HCT116 (cell line): ENCODE measurements at regions of chr9 and their contacts with region 1.

Region 1: DNA sequence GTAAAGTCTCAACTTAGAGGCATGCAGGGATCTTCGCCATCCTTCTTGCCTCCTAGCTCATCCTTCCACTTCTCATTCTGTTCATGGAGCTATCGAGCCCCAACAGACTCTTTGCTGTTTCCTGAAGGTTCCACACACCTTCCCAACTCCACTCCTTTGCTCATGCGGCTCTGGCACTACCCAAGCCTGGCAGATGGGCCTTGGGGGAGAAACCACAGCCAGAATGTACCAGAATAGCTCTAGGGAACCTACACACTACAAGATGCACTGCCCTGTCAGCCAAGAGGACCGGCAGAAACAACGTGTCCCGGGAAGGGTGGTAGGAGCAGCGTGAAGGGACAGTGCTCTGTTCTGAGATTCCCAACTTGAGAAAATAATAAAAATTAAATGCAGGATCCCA is 178.9 kb downstream of the GABBR2 start:
- DNase-seq: no peak
- ATAC-seq: no peak
- H3K4me3 ChIP-seq: no peak overlapping the region
- H3K27ac ChIP-seq: no peak overlapping the region
- H3K4me1 ChIP-seq: no peaks in the 10 kb centered on the region
- H3K27me3 ChIP-seq: no peaks in the 10 kb centered on the region
- CTCF ChIP-seq: no peak
- POLR2A ChIP-seq: no peak
- RAD21 ChIP-seq: no peak

Region 2: DNA sequence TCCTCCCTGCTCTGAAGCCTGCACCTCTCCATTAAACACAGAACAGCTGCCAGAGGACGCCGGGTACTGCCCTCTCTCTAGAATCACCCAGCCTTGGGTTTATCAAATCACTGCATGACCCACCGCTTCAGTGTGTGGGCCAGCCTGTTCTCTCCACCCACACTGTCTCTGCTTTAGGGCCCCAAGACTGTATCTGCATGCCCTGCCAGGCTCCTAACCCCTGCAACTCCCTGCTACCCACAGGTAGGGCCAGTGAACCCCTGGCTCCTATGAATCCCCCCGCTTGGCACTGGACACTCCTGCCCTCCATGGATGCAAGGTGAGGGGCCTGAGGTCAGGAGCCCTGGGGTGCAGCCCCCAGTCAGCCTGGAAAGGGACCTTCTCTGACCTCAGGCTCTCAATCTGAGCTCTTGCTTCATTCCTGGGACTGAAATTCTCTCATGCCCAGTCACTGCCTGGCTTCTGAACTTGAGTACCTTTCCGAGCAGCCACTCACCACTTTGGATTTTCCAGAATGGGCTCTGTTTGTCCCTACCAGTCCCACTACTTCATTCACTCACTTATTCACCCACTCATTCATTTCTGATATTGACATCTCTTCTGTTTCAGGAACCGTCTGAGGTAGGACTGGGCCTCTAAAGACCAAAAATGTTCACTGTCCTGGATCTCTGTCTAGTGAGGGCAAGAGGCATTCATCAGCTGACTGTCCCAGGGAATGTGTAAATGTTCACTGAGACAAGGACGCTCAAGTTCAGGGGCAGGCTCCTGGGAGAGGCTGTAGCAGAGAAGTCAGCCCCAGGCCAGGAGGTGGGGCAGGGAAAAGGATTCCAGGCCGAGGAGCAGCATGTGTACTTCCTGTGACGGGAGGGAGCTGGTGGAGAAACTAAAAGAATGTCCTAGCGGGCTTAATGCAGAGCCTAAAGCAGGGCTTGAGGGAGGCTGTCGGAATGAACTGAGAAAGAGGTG is 27.2 kb before region 1 on chr9:
- CTCF ChIA-PET with region 1: no interaction called
- POLR2A ChIA-PET with region 1: no interaction called
- RAD21 ChIA-PET with region 1: no interaction called
- intact Hi-C with region 1: no loop called
- DNase-seq: no peak
- ATAC-seq: no peak
- H3K4me3 ChIP-seq: no peak overlapping the region
- H3K27ac ChIP-seq: no peak overlapping the region
- H3K4me1 ChIP-seq: no peaks in the 10 kb centered on the region
- H3K27me3 ChIP-seq: peaks cover 5% of the 10 kb centered on the region; the same call in 1 of the 2 replicates
- CTCF ChIP-seq: no peak
- POLR2A ChIP-seq: no peak
- RAD21 ChIP-seq: no peak

Region 3: GRCh38 chr9:98665501-98665900 is 135.7 kb after region 1 on chr9:
- CTCF ChIA-PET with region 1: no interaction called
- POLR2A ChIA-PET with region 1: no interaction called
- RAD21 ChIA-PET with region 1: no interaction called
- intact Hi-C with region 1: no loop called
- DNase-seq: no peak
- ATAC-seq: no peak
- H3K4me3 ChIP-seq: no peak overlapping the region
- H3K27ac ChIP-seq: no peak overlapping the region
- H3K4me1 ChIP-seq: no peaks in the 10 kb centered on the region
- H3K27me3 ChIP-seq: 0 out of 2 replicates have a peak, but pooled peaks cover 3% of the 10 kb centered on the region
- CTCF ChIP-seq: no peak
- POLR2A ChIP-seq: no peak
- RAD21 ChIP-seq: no peak

Region 4: GRCh38 chr9:98766586-98766985 is 236.7 kb after region 1 on chr9:
- CTCF ChIA-PET with region 1: no interaction called
- POLR2A ChIA-PET with region 1: no interaction called
- RAD21 ChIA-PET with region 1: no interaction called
- intact Hi-C with region 1: loop called (anchors 5 kb)
- DNase-seq: no peak
- ATAC-seq: no peak
- H3K4me3 ChIP-seq: no peak overlapping the region
- H3K27ac ChIP-seq: no peak overlapping the region
- H3K4me1 ChIP-seq: no peaks in the 10 kb centered on the region
- H3K27me3 ChIP-seq: no peaks in the 10 kb centered on the region
- CTCF ChIP-seq: no peak
- POLR2A ChIP-seq: no peak
- RAD21 ChIP-seq: no peak

Region 5: GRCh38 chr9:99307851-99308250 is 778.0 kb after region 1 on chr9:
- CTCF ChIA-PET with region 1: no interaction called
- POLR2A ChIA-PET with region 1: no interaction called
- RAD21 ChIA-PET with region 1: no interaction called
- intact Hi-C with region 1: no loop called
- DNase-seq: no peak
- ATAC-seq: no peak; the same call in 1 of the 2 replicates
- H3K4me3 ChIP-seq: no peak overlapping the region
- H3K27ac ChIP-seq: no peak overlapping the region
- H3K4me1 ChIP-seq: peaks cover 0 to 2% of the 10 kb centered on the region in 2 experiments; a peak in 1 of 4 replicates
- H3K27me3 ChIP-seq: no peaks in the 10 kb centered on the region
- CTCF ChIP-seq: no peak
- POLR2A ChIP-seq: no peak
- RAD21 ChIP-seq: no peak